Activated T-helper 1 cell treated with anti-CD3 and anti-CD28 coated beads, Interleukin-12 subunit alpha, Interleukin-12 subunit beta, Interleukin-2, Interleukin-4 antibody, amounts not matched to agents 30 ng/mL and 10 ng/mL and 1 ng/mL, durations not matched to agents 14 hours and 24 hours and 36 hours (primary cell): ENCODE measurements at regions of chr22 and their contacts with region 1.

Region 1: GRCh38 chr22:29603358-29604075 is at the start of gene NF2:
- DNase-seq: peak; percentile 99
- H3K4me3 Mint-ChIP-seq: peak within 1 kb of the TSS; percentile 96
- H3K27ac Mint-ChIP-seq: peak within 1 kb of the TSS; percentile 98
- H3K4me1 Mint-ChIP-seq: peaks cover 23% of the 10 kb centered on the region
- H3K27me3 Mint-ChIP-seq: no peaks in the 10 kb centered on the region
- total RNA-seq, gene NF2: 65.7 and 66.1 TPM in 2 replicates

Region 2: GRCh38 chr22:29553351-29554224 is 49.9 kb before region 1 on chr22 and contains the start of gene THOC5:
- intact Hi-C with region 1: loop called (anchors 1 kb)
- DNase-seq: peak; percentile 86
- H3K4me3 Mint-ChIP-seq: peak within 1 kb of the TSS; percentile 93
- H3K27ac Mint-ChIP-seq: peak within 1 kb of the TSS; percentile 94
- H3K4me1 Mint-ChIP-seq: peaks cover 23% of the 10 kb centered on the region
- H3K27me3 Mint-ChIP-seq: no peaks in the 10 kb centered on the region
- total RNA-seq, gene THOC5: 69.0 and 76.2 TPM in 2 replicates

Region 3: DNA sequence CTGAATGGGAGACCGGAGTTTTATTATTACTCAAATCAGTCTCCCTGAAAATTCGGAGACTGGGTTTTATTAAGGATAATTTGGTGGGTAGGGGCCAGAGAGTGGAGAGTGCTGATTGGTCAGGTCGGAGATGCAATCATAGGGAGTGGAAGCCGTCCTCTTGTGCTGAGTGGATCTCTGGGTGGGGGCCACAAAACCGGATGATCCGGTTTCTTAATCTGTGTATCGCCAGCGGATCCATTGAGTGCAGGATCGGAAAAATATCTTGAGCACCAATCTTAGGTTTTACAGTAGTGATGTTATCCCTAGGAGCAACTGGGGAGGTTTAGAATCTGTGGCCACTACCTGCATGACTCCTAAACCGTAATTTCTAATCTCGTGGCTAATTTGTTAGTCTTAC is 21.7 kb before region 1 on chr22:
- intact Hi-C with region 1: loop called (anchors 1 kb)
- DNase-seq: no peak
- H3K4me3 Mint-ChIP-seq: peak overlapping the region; percentile 92
- H3K27ac Mint-ChIP-seq: peak overlapping the region; percentile 93
- H3K4me1 Mint-ChIP-seq: peaks cover 13% of the 10 kb centered on the region
- H3K27me3 Mint-ChIP-seq: peaks cover 2% of the 10 kb centered on the region

Region 4: DNA sequence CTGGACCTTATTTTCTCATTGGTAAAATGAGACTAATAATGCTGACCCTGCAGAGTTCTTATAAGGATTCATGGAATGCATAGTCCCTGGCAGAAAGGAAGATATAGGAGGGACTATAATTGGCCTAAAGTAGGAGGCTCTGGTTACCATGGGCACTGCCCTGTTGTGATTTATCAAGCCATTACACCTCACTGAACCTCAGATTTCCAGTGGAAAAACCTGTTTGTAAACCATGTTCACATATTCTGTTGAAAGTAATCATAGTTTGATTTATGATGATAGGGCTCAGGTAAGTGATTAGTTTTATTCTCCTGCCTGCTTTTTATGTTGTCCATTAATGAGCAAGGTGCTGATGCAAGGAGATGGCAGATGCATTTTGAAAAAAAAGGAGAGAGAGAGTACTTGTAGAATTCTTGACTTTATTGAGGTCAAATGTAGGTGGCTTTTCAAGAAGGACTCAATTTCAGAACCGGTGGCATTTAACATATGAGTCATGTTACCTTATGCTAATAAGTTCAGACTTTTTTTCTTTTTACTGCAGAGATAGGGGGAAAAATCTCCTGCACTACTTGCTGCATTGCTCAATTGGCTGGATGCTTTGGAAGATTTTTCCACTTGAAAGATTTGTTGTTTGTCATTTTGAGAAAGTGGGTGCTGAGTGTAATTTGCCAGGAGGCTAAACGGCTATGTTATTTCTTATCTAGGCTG is 14.6 kb after region 1 on chr22:
- intact Hi-C with region 1: loop called (anchors 1 kb)
- DNase-seq: no peak
- H3K4me3 Mint-ChIP-seq: no peak overlapping the region
- H3K27ac Mint-ChIP-seq: peak overlapping the region; percentile 63
- H3K4me1 Mint-ChIP-seq: peaks cover 30% of the 10 kb centered on the region
- H3K27me3 Mint-ChIP-seq: no peaks in the 10 kb centered on the region

Region 5: DNA sequence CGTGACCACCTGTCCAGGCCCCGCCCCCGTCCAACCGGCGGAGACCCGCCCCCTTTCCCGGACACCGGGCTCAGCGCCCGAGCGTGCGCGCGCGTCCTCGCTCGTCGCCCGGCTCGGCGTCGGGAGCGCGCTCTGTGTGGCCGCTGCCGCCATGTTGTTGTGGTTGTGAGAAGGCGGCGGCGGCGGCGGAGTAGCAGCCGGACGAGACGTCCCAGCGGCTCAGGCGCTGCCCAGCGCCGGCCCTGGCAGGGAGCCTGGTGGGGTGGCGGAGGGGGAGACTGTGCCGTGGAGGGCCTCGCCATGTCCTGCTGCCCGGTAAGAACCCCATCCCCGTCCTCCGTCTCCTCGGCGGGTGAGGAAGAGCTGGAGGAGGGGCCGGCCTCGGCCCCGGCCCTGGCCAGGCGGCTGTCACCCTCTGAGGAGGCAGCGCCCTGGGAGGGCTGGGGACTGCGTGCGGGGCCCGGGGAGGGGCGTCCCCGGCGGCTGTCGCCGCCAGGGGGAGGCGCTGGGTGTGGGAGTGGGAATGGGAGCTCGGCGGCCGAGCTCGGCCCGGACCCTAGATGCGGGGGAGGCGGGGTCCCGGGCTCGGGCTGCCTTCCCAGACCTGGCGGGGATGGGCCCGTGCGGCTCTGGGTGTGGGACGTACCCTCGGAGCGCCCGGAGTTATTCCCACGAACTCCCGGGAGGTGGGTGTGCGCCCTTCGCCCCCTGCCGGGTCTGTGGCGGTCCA is 279.7 kb after region 1 on chr22 and contains the start of gene MTMR3:
- intact Hi-C with region 1: loop called (anchors 1 kb)
- DNase-seq: peak; percentile 94
- H3K4me3 Mint-ChIP-seq: peak within 1 kb of the TSS; percentile 82
- H3K27ac Mint-ChIP-seq: peak within 1 kb of the TSS; percentile 48
- H3K4me1 Mint-ChIP-seq: peaks cover 7% of the 10 kb centered on the region
- H3K27me3 Mint-ChIP-seq: peaks cover 5% of the 10 kb centered on the region
- total RNA-seq, gene MTMR3: 20.6 and 27.8 TPM in 2 replicates